ENCODE measurements at regions of chr3 and their contacts with region 1.

Region 1: GRCh38 chr3:42190701-42191462 is 75.1 kb downstream of the CCK start:
- DNase-seq: peak; percentile 71

Region 2: GRCh38 chr3:42118762-42119361 is 72.0 kb before region 1 on chr3:
- CTCF ChIA-PET with region 1: interaction called, 45 read pairs
- POLR2A ChIA-PET with region 1: interaction called, 5 read pairs
- DNase-seq: peak; percentile 67

Region 3: DNA sequence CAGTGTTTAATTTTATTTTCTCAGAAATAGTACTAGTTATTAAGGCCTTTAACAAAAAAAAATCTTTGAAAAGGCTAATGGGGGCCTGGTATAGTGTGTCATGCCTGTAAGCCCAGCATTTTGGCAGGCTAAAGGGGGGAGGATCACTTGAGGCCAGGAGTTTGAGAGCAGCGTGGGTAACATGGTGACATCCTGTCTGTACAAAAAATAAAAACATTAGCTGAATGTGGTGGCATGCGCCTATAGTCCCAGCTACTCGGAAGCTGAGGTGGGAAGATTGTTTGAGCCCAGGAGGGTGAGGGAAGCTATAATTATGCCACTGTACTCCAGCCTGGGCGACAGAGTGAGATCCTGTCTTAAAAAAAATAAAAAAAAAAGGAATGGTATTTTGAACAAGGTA is 37.8 kb before region 1 on chr3:
- CTCF ChIA-PET with region 1: no interaction called
- POLR2A ChIA-PET with region 1: no interaction called
- DNase-seq: no peak

Region 4: DNA sequence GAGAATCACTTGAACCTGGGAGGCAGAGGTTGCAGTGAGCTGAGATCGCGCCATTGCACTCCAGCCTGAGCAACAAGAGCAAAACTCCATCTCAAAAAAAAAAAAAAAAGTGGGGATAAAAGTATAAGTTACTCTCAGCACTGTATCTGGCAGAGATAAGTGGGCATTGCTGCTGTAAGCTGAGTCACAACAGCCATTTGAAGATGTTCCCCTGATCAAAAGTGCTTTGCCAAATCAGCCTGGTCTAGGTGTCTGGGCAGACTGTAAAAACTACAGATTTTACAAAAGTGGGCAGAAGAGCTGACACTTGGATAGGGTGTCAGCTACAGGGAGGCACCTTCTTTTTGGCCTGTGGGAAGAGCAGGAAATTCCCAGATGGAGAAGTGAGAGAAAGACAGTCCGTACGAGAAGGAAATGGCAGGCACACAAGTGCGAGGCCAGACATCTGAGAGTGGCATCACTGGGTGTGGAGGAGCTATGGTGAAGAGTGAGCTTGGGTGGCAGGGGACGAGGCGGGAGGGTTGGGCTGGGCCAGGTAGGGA is 21.2 kb before region 1 on chr3:
- CTCF ChIA-PET with region 1: interaction called, 17 read pairs
- POLR2A ChIA-PET with region 1: no interaction called
- DNase-seq: no peak

Region 5: DNA sequence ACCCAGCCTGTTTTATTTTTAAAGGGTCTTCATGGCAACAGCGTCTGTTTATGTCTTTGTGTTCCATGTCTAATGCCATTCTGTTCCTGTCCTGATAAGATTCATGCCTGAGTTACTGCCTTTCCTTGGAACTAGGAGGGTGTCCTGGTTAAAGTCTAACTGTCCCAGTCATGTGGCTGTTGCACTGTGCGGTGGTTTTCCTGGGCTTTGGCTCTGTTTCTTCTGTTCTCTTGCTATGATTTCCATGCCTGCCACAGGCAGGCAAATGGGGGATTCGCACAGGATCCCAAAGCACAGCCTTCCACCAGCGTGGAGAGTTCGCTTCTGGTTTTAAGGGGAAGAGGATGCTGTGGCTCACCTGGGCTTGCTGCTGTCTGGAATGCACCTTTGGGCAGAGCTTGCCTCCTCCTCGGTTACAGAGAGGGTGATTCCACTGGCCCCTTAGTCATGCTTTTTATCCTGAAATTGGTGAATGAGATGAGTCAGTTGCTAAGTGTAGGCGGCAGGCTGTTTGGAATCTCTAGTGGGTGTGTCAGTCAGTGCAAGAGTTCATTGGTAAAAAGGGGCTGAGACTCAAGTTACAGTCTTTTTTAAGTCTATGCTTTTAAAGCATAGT is 11.7 kb before region 1 on chr3:
- CTCF ChIA-PET with region 1: interaction called, 38 read pairs
- POLR2A ChIA-PET with region 1: no interaction called
- DNase-seq: peak; percentile 34

Region 6: GRCh38 chr3:42205800-42206514 is 15.1 kb after region 1 on chr3:
- CTCF ChIA-PET with region 1: interaction called, 12 read pairs
- POLR2A ChIA-PET with region 1: no interaction called
- DNase-seq: no peak

Region 7: DNA sequence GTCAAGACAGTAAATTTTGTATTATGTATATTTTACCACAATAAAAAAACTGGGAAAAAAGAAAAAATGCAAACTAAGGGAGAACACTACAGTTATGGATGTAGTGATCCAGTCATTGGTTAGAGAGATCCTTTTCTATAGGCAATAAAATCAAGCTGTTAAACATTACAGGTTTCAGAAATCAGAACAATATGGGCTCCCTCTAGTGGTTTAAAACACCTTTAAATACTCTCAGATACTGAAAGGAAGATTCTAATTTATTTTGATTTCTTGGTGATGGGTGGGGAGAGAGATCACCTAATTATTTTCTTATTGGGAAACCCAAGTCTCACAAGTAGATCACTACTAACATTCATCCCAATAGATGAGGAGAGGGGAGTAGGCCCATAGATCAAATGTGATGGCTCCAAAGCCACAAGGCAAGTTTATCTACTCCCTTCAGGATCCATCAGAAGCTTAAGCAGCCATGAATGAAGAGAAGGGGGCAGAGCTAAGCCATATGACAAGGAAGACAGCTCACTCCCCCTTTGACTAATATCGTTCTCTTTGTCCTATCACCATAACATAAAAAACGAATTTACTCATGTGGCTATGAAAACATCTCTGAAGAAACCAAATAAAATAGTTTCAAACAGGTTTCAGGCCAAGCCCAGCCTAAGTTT is 1312.3 kb after region 1 on chr3:
- CTCF ChIA-PET with region 1: interaction called, 10 read pairs
- POLR2A ChIA-PET with region 1: no interaction called
- DNase-seq: no peak